SK-N-SH (cell line): ENCODE measurements at regions of chr1 and their contacts with region 1.

Region 1: DNA sequence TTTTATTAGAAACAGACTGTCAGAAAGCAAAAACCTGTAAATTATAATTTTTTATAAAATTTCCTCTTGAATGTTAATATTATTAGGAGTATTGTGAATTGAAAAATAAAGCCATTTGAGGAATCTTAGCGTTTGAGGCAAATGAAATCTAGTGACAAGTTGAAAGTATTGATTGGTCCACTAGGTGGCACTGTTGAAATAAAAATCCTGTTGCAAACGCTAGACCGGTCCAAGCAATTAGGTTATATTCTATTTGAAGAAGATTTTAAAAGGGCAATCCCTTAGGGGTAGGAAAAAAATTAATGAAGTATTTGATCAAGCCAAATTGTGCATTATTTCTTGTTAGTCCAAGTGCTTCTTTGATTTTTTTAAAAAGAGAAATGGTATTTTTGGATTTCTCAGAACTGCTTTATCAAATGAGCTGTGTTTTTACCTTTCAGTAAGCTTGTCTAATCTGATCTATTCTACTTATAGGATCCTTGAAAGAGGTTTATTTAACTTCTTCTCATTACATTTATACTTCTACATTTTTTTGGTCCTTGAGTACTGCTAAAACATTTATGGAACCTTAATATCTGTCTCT is 57.7 kb downstream of the ATG4C start:
- DNase-seq: peak; percentile 52
- H3K4me3 ChIP-seq: no peak overlapping the region; a peak in 1 of 4 replicates
- H3K27ac ChIP-seq: no peak overlapping the region
- H3K4me1 ChIP-seq: no peaks in the 10 kb centered on the region; a peak in 1 of 4 replicates
- H3K27me3 ChIP-seq: no peaks in the 10 kb centered on the region
- CTCF ChIP-seq: peak; percentile 80
- EP300 ChIP-seq: no peak
- RAD21 ChIP-seq: peak; percentile 89

Region 2: DNA sequence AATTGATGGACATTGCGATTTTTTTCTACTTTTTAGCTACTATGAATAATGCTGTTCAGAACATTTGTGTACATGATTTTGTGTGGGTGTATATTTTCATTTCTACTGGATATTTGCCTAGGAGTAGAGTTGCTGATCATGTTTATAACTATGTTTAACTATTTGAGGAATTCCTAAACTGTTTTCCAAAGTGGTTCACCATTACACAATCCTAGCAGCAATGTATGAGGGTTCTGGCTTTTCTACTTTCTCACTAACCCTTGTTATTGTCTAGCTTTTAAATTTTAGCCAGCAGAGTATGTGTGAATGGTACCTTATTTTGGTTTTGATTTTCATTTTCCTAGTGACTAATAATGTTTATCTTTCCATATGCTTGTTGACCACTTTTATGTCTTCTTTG is 28.5 kb after region 1 on chr1:
- CTCF ChIA-PET with region 1: interaction called, 10 read pairs
- POLR2A ChIA-PET with region 1: no interaction called
- DNase-seq: no peak
- H3K4me3 ChIP-seq: no peak overlapping the region
- H3K27ac ChIP-seq: no peak overlapping the region
- H3K4me1 ChIP-seq: no peaks in the 10 kb centered on the region
- H3K27me3 ChIP-seq: no peaks in the 10 kb centered on the region
- CTCF ChIP-seq: no peak
- EP300 ChIP-seq: no peak
- RAD21 ChIP-seq: no peak

Region 3: DNA sequence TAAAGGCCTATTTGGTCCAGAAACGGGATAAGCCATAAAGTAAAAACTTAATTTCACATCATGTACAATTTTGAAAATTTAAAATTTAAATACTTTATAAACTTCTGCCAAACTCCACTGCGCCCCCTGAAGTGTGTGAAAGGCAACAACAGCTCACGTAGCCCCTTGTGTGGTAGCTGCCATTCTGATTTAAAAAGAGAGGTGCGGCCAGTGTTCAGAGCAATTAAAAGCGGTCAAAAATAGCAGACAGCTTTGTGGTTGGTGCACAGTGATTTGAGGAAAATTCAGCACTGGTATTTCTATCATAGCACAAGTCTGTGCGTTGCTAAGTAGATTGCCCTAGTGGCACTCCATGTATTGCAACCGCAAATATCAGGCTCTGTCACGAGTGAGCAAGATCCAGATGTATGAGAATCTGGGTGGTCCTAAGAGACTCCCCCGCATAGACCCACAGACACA is 64.8 kb after region 1 on chr1:
- CTCF ChIA-PET with region 1: interaction called, 17 read pairs
- POLR2A ChIA-PET with region 1: no interaction called
- DNase-seq: peak; percentile 10
- H3K4me3 ChIP-seq: no peak overlapping the region
- H3K27ac ChIP-seq: no peak overlapping the region
- H3K4me1 ChIP-seq: peaks cover 0 to 4% of the 10 kb centered on the region in 2 experiments; a peak in 2 of 4 replicates
- H3K27me3 ChIP-seq: no peaks in the 10 kb centered on the region
- CTCF ChIP-seq: peak; percentile 62
- EP300 ChIP-seq: no peak
- RAD21 ChIP-seq: peak; percentile 22; the same call in 1 of the 2 replicates

Region 4: DNA sequence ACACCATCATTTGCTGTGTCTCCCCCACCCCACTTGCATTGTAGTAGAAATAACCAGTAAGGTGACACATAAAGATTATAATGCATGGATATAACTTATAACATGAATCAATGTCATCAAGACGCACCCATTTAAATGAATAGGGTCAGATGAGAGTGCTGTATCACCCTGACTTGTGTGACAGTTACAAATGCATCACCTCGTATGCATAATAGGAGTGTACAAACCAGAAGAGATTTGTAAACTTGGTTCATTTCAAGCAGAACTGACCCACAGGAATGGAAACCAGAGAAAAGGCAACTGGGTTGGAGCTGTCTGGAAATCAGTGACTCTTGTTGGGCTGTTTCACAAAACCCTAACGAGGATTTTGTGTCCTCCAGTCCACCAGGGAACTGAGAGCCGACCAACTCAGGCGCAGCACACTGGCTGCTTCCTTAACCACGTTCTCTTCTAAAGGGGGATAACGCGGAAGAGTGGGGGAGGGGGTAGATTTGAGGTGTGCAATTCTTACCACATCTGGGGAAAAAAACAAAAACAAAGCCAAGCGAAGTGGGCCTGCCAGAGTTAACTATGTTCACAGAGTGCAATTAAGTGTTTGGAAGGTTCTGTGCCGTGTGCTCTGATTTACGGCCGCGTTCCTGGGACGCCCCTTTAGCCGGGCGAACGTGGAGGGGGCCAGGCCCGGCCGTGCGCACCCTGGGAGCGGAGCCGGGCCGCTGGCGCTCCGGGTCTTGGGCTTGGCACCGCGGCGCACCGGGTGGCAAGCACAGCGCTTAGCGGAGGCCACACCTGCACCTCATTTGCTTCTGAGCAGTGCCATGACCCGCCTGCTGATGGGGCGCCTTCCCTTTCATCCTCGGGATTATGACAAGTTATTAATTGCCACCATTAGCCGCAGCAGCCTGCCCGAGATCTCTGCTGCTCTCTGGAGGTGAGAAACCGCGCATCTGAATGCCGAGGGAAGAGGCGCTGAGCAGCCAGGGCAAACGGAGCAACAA is 231.9 kb after region 1 on chr1:
- CTCF ChIA-PET with region 1: no interaction called
- POLR2A ChIA-PET with region 1: no interaction called
- DNase-seq: peak; percentile 69
- H3K4me3 ChIP-seq: no peak overlapping the region; a peak in 1 of 4 replicates
- H3K27ac ChIP-seq: no peak overlapping the region
- H3K4me1 ChIP-seq: no peaks in the 10 kb centered on the region; a peak in 1 of 4 replicates
- H3K27me3 ChIP-seq: peaks cover 13% of the 10 kb centered on the region; the same call in 1 of the 2 replicates
- CTCF ChIP-seq: no peak
- EP300 ChIP-seq: no peak
- RAD21 ChIP-seq: peak; percentile 41; the same call in 1 of the 2 replicates

Region 5: GRCh38 chr1:63148825-63149645 is 307.4 kb after region 1 on chr1:
- CTCF ChIA-PET with region 1: interaction called, 31 read pairs
- POLR2A ChIA-PET with region 1: no interaction called
- DNase-seq: peak; percentile 41
- H3K4me3 ChIP-seq: no peak overlapping the region; a peak in 1 of 4 replicates
- H3K27ac ChIP-seq: no peak overlapping the region
- H3K4me1 ChIP-seq: no peaks in the 10 kb centered on the region
- H3K27me3 ChIP-seq: no peaks in the 10 kb centered on the region
- CTCF ChIP-seq: peak; percentile 78
- EP300 ChIP-seq: no peak
- RAD21 ChIP-seq: peak; percentile 79